ENCODE measurements at regions of chr15 and their contacts with region 1.

Region 1: DNA sequence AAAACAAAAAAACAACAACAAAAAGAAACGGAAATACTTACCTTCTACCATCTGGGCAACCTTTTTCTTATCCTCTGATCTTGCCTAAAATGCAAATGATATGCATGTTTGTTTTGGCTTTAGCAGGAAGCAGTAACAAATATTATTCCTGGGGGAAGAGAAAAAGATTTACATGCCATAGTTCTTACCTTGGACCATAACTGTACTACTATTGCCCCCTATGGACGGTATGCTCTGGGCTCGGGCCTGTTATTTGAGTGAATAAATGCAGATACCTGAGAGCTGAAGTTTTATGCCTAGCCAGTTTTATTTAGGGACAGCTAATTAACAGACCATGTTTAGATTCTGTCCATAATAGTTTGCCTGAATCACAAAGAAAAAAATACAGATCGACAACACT is 12.6 kb upstream of the STARD5 start:
- DNase-seq: peak; percentile 52
- ATAC-seq: peak; percentile 51
- H3K4me3 Mint-ChIP-seq: no peak overlapping the region
- H3K27ac Mint-ChIP-seq: no peak overlapping the region
- H3K4me1 Mint-ChIP-seq: peaks cover 7% of the 10 kb centered on the region
- H3K27me3 Mint-ChIP-seq: no peaks in the 10 kb centered on the region

Region 2: DNA sequence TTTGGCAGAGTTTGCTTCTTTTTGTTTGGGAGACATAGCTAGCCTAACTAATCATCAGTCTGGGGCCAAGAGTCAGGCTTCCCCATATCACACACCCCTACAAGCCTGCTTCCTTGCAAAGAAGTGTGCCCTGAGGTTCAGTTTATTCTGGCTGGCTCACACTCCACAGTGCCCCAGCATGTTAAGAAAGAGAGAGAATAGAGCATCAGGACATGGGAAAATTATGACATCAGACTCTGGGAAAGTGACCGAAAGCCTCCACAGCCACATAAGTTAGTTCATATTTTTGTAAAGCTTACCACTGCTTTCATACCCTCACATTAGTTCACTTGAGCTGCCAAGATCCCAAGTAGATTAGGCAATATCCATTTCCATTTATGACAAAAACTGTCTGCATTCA is 265.4 kb before region 1 on chr15:
- CTCF ChIA-PET with region 1: no interaction called
- POLR2A ChIA-PET with region 1: no interaction called
- intact Hi-C with region 1: no loop called
- DNase-seq: no peak
- ATAC-seq: no peak
- H3K4me3 Mint-ChIP-seq: no peak overlapping the region
- H3K27ac Mint-ChIP-seq: no peak overlapping the region
- H3K4me1 Mint-ChIP-seq: no peaks in the 10 kb centered on the region
- H3K27me3 Mint-ChIP-seq: no peaks in the 10 kb centered on the region

Region 3: DNA sequence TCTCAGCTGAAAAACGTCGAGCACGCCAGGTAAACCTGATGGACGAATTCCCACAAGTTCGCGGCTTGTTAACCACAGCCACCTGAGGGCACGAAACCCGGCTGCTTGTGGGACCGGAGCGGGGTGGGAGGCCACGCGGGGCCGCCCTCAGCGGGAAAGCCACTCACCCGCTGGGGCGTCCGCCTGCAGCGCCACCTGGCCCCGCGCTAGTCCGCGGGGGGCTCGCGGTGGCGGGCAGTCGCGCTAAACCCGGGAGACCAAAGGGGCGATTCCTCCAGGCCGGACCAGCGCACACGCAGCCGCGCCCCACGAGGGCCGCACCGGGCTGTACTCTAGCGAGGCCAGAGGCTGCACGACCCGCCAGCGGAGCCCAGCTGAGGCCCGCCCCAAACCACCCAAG is 218.2 kb before region 1 on chr15:
- CTCF ChIA-PET with region 1: no interaction called
- POLR2A ChIA-PET with region 1: no interaction called
- intact Hi-C with region 1: no loop called
- DNase-seq: no peak
- ATAC-seq: no peak
- H3K4me3 Mint-ChIP-seq: no peak overlapping the region
- H3K27ac Mint-ChIP-seq: no peak overlapping the region
- H3K4me1 Mint-ChIP-seq: no peaks in the 10 kb centered on the region
- H3K27me3 Mint-ChIP-seq: peaks cover 39% of the 10 kb centered on the region

Region 4: GRCh38 chr15:81400640-81401236 is 64.2 kb after region 1 on chr15:
- CTCF ChIA-PET with region 1: no interaction called
- POLR2A ChIA-PET with region 1: no interaction called
- intact Hi-C with region 1: loop called in 1 of 2 experiments (anchors 5 kb)
- DNase-seq: no peak
- ATAC-seq: peak; percentile 44
- H3K4me3 Mint-ChIP-seq: no peak overlapping the region
- H3K27ac Mint-ChIP-seq: no peak overlapping the region
- H3K4me1 Mint-ChIP-seq: peaks cover 3% of the 10 kb centered on the region
- H3K27me3 Mint-ChIP-seq: no peaks in the 10 kb centered on the region